ENCODE measurements at regions of chr3 and their contacts with region 1.

Region 1: GRCh38 chr3:46705022-46705530 is 3.9 kb downstream of the TMIE start:
- DNase-seq: peak; percentile 36 to 80 (median 68)
- ATAC-seq: peak; percentile 95
- H3K4me3 ChIP-seq: no peak overlapping the region
- H3K4me3 Mint-ChIP-seq: no peak overlapping the region
- H3K27ac ChIP-seq: no peak overlapping the region
- H3K27ac Mint-ChIP-seq: no peak overlapping the region
- H3K4me1 ChIP-seq: peaks cover 4% of the 10 kb centered on the region
- H3K4me1 Mint-ChIP-seq: peaks cover 7% of the 10 kb centered on the region
- H3K27me3 ChIP-seq: peaks cover 5 to 6% of the 10 kb centered on the region in 2 experiments
- H3K27me3 Mint-ChIP-seq: peaks cover 7% of the 10 kb centered on the region
- CTCF ChIP-seq: peak; percentile 95

Region 2: GRCh38 chr3:46293991-46294833 is 410.9 kb before region 1 on chr3:
- CTCF ChIA-PET with region 1: no interaction called
- POLR2A ChIA-PET with region 1: no interaction called
- intact Hi-C with region 1: loop called in 1 of 2 experiments (anchors 5 kb)
- DNase-seq: no peak
- ATAC-seq: no peak
- H3K4me3 ChIP-seq: no peak overlapping the region
- H3K4me3 Mint-ChIP-seq: no peak overlapping the region
- H3K27ac ChIP-seq: peak overlapping the region in 1 of 2 experiments; percentile 51
- H3K27ac Mint-ChIP-seq: peak overlapping the region; percentile 80
- H3K4me1 ChIP-seq: peaks cover 16% of the 10 kb centered on the region
- H3K4me1 Mint-ChIP-seq: peaks cover 56% of the 10 kb centered on the region
- H3K27me3 ChIP-seq: no peaks in the 10 kb centered on the region
- H3K27me3 Mint-ChIP-seq: no peaks in the 10 kb centered on the region
- CTCF ChIP-seq: no peak

Region 3: DNA sequence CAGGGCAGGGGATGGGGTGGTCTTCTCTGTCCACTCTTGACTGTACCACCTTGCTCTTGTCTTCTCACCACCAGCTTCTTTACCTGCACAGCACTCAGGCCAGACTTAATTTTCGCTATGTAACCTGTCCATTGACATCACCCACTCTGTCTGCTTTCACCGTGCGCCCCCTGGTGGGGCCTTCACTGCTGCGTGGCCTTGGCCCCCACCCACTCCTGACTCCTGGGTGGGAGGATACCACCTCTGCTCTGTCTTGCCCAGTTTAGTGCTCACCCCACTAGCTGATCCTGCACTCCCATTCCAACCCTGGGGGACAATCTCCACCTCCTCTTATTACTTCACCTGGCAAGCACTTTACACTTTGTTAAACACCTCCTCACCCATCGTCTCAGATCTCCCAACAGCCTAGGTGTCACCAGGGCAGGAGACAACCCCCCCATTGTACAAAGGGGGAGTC is 190.2 kb after region 1 on chr3:
- CTCF ChIA-PET with region 1: interaction called, 25 read pairs
- POLR2A ChIA-PET with region 1: no interaction called
- intact Hi-C with region 1: loop called in 1 of 2 experiments (anchors 1 kb)
- DNase-seq: peak; percentile 61 to 87 (median 79)
- ATAC-seq: peak; percentile 91
- H3K4me3 ChIP-seq: no peak overlapping the region
- H3K4me3 Mint-ChIP-seq: no peak overlapping the region
- H3K27ac ChIP-seq: no peak overlapping the region
- H3K27ac Mint-ChIP-seq: no peak overlapping the region
- H3K4me1 ChIP-seq: no peaks in the 10 kb centered on the region
- H3K4me1 Mint-ChIP-seq: peaks cover 12% of the 10 kb centered on the region
- H3K27me3 ChIP-seq: peaks cover 4 to 18% of the 10 kb centered on the region in 2 experiments
- H3K27me3 Mint-ChIP-seq: peaks cover 54% of the 10 kb centered on the region
- CTCF ChIP-seq: peak; percentile 71

Region 4: DNA sequence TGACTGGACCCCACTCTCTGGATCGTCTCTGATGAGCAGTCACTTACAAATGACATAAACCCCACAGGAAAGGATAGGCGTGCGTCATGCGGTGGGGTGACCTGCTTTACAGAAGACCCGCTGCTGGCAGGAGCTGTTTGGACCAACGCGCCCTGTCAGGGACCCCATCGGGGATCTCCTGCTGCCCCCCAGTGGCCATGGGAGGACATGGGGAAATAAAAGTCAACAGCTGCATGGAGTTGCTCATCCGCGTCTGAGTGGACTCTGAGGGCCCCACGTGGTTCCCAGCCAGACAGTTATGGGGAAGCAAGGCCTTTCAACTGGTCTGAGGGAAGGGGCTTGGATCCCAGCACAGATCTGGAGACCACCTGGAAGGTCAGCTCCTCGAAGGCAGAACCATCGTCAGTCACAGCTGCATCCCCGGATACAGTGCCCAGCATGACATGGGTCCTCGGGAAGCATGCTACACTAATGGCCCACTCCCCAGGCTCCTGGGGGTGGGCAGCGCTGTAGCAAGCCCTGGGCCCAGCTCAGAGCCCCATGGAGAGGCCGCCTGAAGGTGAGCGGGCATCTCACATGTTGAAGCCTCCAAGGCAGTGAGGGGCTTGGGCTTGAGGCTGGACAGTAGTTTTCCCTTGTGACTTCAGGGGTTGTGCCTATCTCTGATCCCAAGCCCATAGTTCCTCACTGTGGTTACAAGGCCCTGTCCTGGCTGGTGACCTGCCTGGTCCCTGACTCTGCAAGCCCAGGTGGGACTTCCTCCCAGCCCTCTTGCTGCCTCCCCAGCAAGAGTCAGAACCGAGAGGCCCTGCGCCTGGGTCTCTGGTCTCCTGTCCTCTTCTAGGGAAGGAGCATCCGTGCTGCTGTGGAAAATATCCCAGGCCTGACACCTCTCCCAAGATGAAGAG is 204.7 kb after region 1 on chr3:
- CTCF ChIA-PET with region 1: interaction called, 9 read pairs
- POLR2A ChIA-PET with region 1: no interaction called
- intact Hi-C with region 1: loop called in 1 of 2 experiments (anchors 1 kb)
- DNase-seq: peak; percentile 65 to 84 (median 81)
- ATAC-seq: peak; percentile 89
- H3K4me3 ChIP-seq: no peak overlapping the region
- H3K4me3 Mint-ChIP-seq: no peak overlapping the region
- H3K27ac ChIP-seq: no peak overlapping the region
- H3K27ac Mint-ChIP-seq: no peak overlapping the region
- H3K4me1 ChIP-seq: peaks cover 17% of the 10 kb centered on the region
- H3K4me1 Mint-ChIP-seq: peaks cover 18% of the 10 kb centered on the region
- H3K27me3 ChIP-seq: no peaks in the 10 kb centered on the region
- H3K27me3 Mint-ChIP-seq: no peaks in the 10 kb centered on the region
- CTCF ChIP-seq: peak; percentile 91

Region 5: DNA sequence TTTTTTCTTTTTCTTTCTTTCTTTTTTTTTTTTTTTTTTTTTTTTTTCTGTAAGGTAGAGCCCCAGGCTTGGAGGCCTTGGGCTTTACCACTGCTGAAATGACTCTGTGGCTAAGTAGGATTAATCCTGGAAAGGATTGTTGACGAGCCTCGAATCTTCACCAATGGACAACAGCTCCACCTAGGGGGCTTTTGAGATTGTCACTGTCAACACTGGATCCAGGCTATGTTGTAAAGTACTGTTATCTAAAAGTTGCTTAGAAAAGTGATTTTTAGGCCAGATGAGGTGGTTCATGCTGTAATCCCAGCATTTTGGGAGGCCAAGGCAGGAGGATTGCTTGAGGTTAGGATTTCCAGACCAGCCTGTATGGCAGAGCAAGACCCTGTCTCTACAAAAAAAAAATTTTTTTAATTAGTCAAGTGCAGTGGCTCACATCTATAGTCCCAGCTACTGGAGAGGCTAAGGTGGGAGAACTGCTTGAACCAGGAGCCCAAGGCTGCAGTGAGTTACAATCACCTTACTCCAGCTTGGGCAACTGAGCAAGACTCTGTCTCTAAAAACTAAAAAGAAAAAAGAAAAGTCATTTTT is 619.3 kb after region 1 on chr3:
- CTCF ChIA-PET with region 1: interaction called, 4 read pairs
- POLR2A ChIA-PET with region 1: no interaction called
- intact Hi-C with region 1: loop called (anchors 1 to 2 kb)
- DNase-seq: peak; percentile 6 to 69 (median 52)
- ATAC-seq: peak; percentile 56
- H3K4me3 ChIP-seq: no peak overlapping the region
- H3K4me3 Mint-ChIP-seq: no peak overlapping the region
- H3K27ac ChIP-seq: no peak overlapping the region
- H3K27ac Mint-ChIP-seq: no peak overlapping the region
- H3K4me1 ChIP-seq: no peaks in the 10 kb centered on the region
- H3K4me1 Mint-ChIP-seq: no peaks in the 10 kb centered on the region
- H3K27me3 ChIP-seq: no peaks in the 10 kb centered on the region
- H3K27me3 Mint-ChIP-seq: no peaks in the 10 kb centered on the region
- CTCF ChIP-seq: peak; percentile 70

Region 6: GRCh38 chr3:47370887-47371697 is 666.0 kb after region 1 on chr3:
- CTCF ChIA-PET with region 1: no interaction called
- POLR2A ChIA-PET with region 1: no interaction called
- intact Hi-C with region 1: loop called in 1 of 2 experiments (anchors 5 kb)
- DNase-seq: peak in 6 of 9 experiments; percentile 33 to 53 (median 39)
- ATAC-seq: no peak
- H3K4me3 ChIP-seq: no peak overlapping the region
- H3K4me3 Mint-ChIP-seq: no peak overlapping the region
- H3K27ac ChIP-seq: no peak overlapping the region
- H3K27ac Mint-ChIP-seq: no peak overlapping the region
- H3K4me1 ChIP-seq: no peaks in the 10 kb centered on the region
- H3K4me1 Mint-ChIP-seq: no peaks in the 10 kb centered on the region
- H3K27me3 ChIP-seq: peaks cover 0 to 5% of the 10 kb centered on the region in 2 experiments
- H3K27me3 Mint-ChIP-seq: peaks cover 10% of the 10 kb centered on the region
- CTCF ChIP-seq: peak; percentile 46

Region 7: DNA sequence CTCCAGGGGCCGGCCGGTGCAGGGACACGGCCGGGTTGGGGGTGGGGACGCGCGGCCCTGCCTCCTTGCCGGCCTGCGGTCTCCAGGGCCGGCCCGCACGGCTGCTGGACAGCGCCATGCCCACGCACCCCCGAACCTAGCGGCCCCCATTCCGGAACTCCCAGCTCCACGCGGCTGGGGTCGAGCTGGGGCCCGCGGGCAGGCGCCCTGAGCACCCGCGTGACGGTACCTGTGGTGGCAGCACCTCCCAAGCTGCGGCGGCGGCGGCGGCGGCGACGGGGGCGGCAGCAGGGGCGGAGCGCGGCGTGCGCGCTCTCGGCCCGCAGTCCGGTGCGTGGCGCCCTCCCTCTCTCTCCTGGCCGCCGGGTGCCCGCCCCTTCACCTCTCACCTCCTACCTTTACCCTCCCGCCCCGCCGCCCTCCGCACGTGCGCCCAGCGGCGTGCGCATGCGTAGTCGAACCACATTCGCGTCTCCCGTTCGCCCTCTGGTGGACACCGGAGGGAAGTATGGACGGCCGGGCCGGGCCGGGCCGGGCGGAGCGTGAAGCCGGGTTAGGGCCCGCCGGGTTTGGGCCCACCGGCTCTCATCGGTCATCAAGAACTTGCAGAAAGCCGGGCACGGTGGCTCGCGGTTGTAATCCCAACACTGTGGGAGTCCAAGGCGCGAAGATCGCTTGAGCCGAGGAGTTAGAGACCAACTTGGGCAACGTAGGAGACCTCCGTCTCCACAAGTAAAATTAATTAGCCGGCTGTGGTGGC is 770.7 kb after region 1 on chr3 and contains the start of gene SCAP:
- CTCF ChIA-PET with region 1: no interaction called
- POLR2A ChIA-PET with region 1: no interaction called
- intact Hi-C with region 1: loop called (anchors 2 to 5 kb)
- DNase-seq: peak; percentile 90 to 98 (median 96)
- ATAC-seq: peak; percentile 90
- H3K4me3 ChIP-seq: peak within 1 kb of the TSS; percentile 58 to 83
- H3K4me3 Mint-ChIP-seq: peak within 1 kb of the TSS; percentile 93
- H3K27ac ChIP-seq: peak within 1 kb of the TSS; percentile 69 to 86
- H3K27ac Mint-ChIP-seq: peak within 1 kb of the TSS; percentile 94
- H3K4me1 ChIP-seq: peaks cover 28% of the 10 kb centered on the region
- H3K4me1 Mint-ChIP-seq: peaks cover 43% of the 10 kb centered on the region
- H3K27me3 ChIP-seq: no peaks in the 10 kb centered on the region
- H3K27me3 Mint-ChIP-seq: no peaks in the 10 kb centered on the region
- CTCF ChIP-seq: peak; percentile 97
- total RNA-seq, gene SCAP: 72.8 to 76.6 TPM